ENCODE measurements at regions of chr10 and their contacts with region 1.

Region 1: GRCh38 chr10:73809061-73809818 is 2.2 kb downstream of the NDST2 start:
- DNase-seq: no peak
- ATAC-seq: no peak
- H3K4me3 ChIP-seq: no peak overlapping the region
- H3K27ac ChIP-seq: no peak overlapping the region
- H3K4me1 ChIP-seq: 0 out of 2 replicates have a peak, but pooled peaks cover 9% of the 10 kb centered on the region
- H3K27me3 ChIP-seq: no peaks in the 10 kb centered on the region
- CTCF ChIP-seq: no peak

Region 2: GRCh38 chr10:73641328-73642060 is 167.7 kb before region 1 on chr10 and contains the start of gene MYOZ1:
- CTCF ChIA-PET with region 1: no interaction called
- POLR2A ChIA-PET with region 1: no interaction called
- in situ Hi-C with region 1: no loop called
- intact Hi-C with region 1: no loop called
- DNase-seq: no peak
- ATAC-seq: peak; percentile 37
- H3K4me3 ChIP-seq: no peak within 1 kb of the TSS
- H3K27ac ChIP-seq: no peak within 1 kb of the TSS
- H3K4me1 ChIP-seq: no peaks in the 10 kb centered on the region
- H3K27me3 ChIP-seq: no peaks in the 10 kb centered on the region; the same call in 1 of the 2 replicates
- CTCF ChIP-seq: no peak
- total RNA-seq, gene MYOZ1: not detected

Region 3: GRCh38 chr10:73983096-73984047 is 174.1 kb after region 1 on chr10:
- CTCF ChIA-PET with region 1: no interaction called
- POLR2A ChIA-PET with region 1: interaction called, 10 read pairs
- in situ Hi-C with region 1: no loop called
- intact Hi-C with region 1: no loop called
- DNase-seq: no peak
- ATAC-seq: peak; percentile 52
- H3K4me3 ChIP-seq: no peak overlapping the region
- H3K27ac ChIP-seq: peak overlapping the region; percentile 60
- H3K4me1 ChIP-seq: peaks cover 18% of the 10 kb centered on the region; the same call in 1 of the 2 replicates
- H3K27me3 ChIP-seq: no peaks in the 10 kb centered on the region
- CTCF ChIP-seq: no peak